ENCODE measurements at regions of chr3 and their contacts with region 1.

Region 1: DNA sequence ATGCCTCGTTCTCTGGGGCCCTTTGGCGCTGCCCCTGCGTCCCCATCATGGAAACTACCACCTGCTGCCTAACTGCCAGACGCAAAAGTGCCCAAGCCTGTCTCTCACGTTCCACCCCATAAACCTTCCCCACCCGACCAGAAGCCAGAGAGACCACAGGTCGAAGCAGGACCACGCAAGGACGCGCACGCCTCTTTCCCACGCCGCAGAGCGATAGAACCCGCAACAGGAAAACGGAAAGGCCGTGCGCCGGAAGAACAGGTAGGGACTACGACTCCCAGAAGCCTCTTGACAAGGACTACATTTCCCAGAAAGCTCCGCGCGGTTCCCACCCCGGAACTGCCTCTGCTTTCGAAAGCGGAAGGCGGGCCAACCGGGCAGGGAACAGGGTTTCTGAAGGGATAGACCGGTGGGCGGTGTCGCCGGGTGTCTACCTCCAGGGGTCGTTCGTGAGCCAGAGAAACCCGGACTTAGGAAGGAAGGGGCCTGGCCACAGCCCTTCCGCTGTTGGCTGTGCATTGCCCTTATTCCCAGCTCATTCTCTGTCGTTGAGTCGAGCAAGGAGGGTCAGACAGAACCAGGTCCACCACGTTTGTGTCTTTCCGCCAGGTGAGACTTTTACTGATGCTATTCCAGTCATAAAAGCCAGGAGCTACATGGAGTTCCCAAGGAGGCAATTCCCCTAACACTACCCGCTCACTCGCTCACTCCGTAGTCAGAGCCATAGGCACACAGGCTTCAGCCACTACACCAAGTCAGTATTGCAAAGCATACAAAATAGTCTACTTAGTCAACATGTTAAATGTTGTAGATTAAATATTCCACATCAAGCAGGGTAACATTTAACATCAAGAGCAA is 56.6 kb upstream of the ZBTB38 start:
- DNase-seq: peak; percentile 98 to 99
- H3K4me3 ChIP-seq: peak overlapping the region; percentile 53 to 67
- H3K27ac ChIP-seq: peak overlapping the region; percentile 82 to 83
- H3K4me1 ChIP-seq: no peaks in the 10 kb centered on the region
- H3K27me3 ChIP-seq: no peaks in the 10 kb centered on the region
- CTCF ChIP-seq: peak; percentile 75 to 87 (median 80)
- POLR2A ChIP-seq: peak; percentile 35 to 51

Region 2: GRCh38 chr3:141231101-141231935 is 80.4 kb before region 1 on chr3 and contains the start of gene PXYLP1:
- intact Hi-C with region 1: loop called (anchors 5 kb)
- DNase-seq: peak; percentile 92 to 95
- H3K4me3 ChIP-seq: peak within 1 kb of the TSS; percentile 68 to 77
- H3K27ac ChIP-seq: peak within 1 kb of the TSS; percentile 81 to 92
- H3K4me1 ChIP-seq: no peaks in the 10 kb centered on the region
- H3K27me3 ChIP-seq: no peaks in the 10 kb centered on the region
- CTCF ChIP-seq: peak; percentile 34 to 97 (median 88)
- POLR2A ChIP-seq: peak; percentile 49 to 67
- total RNA-seq, gene PXYLP1: 18.5 to 29.7 (median 26.4) TPM

Region 3: DNA sequence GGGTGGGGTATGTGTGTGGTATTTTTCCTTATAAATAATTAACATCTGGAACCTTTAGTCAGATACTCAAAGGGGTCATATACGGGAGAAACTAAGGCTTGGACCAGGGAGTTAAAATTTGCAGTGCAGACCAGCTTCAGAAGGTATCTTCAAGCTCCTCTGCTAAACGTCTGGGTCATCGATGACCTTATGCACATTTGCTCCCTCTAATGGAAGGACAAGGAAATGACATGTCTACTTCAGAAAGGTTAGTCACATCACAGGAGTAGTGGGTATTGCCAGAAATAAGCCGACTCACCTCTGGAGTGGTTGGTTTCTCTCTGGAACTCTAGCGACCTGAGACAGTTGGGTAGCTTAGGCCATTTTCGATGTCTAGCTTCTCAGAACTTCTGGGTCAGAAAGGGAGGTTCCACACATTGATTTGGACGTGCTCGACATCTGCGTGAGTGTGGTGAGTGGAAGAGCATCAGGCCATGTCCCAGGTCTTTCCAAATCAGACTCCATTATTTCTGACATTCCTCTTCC is 143.2 kb after region 1 on chr3:
- intact Hi-C with region 1: loop called (anchors 5 kb)
- DNase-seq: no peak
- H3K4me3 ChIP-seq: no peak overlapping the region
- H3K27ac ChIP-seq: no peak overlapping the region
- H3K4me1 ChIP-seq: no peaks in the 10 kb centered on the region
- H3K27me3 ChIP-seq: no peaks in the 10 kb centered on the region
- CTCF ChIP-seq: peak; percentile 50 to 72 (median 70)
- POLR2A ChIP-seq: no peak

Region 4: DNA sequence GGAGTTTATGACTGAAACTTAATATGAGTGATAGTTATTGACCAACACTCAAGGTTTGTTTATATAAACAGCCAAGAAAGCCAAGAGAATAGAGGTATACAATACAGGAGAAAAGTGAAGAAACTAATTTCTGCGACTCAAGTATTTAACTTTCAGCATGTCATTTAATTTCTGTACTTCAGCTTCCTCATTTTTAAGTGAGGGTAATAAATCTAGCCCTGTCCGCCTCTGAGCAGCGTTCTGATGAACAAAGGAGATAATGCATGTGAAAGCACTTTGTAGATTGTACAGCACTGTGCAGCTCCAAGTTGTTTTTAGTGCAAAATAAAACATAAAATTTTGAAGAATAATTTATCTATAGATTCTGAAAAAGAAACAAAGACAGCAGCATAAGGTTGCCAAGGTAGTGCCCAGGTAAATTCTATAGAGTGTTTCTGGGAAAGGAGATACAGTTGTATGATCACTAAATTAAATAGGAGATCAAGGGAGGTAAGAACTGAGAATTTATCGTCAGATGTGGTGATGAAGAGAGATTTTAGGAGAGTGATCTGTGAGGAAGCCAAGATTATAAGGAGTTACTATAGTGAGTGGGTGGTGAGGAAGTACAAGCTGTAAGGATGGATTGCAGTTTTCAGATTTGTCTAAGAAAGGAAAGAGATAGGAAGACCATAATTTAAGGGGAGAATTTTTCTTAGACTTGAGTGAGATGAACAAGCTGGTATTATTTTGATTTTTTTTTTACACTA is 246.4 kb after region 1 on chr3:
- intact Hi-C with region 1: loop called (anchors 5 kb)
- DNase-seq: no peak
- H3K4me3 ChIP-seq: no peak overlapping the region
- H3K27ac ChIP-seq: peak overlapping the region; percentile 13 to 43
- H3K4me1 ChIP-seq: peaks cover 0 to 4% of the 10 kb centered on the region in 2 donors
- H3K27me3 ChIP-seq: no peaks in the 10 kb centered on the region
- CTCF ChIP-seq: peak in 1 of 4 experiments; percentile 10
- POLR2A ChIP-seq: no peak